PC-3 (cell line): ENCODE measurements at regions of chrX and their contacts with region 1.

Region 1: DNA sequence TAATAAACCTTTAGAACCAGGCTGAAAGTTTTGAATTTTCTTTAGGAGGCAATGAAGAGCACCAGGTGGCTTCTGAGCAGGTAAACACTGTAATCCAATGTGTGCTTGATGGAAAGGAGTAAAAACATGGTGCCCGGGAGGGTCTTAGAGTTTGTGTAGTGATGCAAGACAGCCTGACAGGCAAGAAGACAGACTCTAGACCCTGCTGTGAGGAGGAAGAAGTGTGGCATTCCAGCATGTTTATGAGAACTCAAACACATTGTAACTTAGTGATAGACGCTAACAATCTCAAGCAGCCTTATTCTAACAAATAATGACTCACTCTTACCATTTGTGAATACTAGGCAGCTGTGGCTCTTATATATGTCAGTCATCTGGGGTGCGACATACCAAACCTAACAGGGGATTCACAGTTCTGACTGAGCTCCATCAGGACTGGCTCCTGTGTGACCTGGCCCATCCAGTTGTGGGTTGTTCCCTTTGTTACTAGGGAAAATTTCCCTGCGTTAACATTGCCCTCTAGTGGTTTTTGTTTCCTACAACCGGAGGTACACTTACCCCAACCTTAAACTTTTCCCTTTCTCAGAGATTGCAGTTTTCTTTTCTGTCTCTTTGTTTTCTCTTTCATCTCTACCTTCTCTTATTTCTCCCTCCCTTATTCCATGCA is 53.8 kb downstream of the VSIG4 start:
- DNase-seq: peak; percentile 80
- ATAC-seq: peak; percentile 90
- H3K4me3 ChIP-seq: no peak overlapping the region
- H3K27ac ChIP-seq: no peak overlapping the region
- H3K4me1 ChIP-seq: peaks cover 4% of the 10 kb centered on the region; the same call in 1 of the 2 replicates
- H3K27me3 ChIP-seq: no peaks in the 10 kb centered on the region
- CTCF ChIP-seq: peak; percentile 71

Region 2: DNA sequence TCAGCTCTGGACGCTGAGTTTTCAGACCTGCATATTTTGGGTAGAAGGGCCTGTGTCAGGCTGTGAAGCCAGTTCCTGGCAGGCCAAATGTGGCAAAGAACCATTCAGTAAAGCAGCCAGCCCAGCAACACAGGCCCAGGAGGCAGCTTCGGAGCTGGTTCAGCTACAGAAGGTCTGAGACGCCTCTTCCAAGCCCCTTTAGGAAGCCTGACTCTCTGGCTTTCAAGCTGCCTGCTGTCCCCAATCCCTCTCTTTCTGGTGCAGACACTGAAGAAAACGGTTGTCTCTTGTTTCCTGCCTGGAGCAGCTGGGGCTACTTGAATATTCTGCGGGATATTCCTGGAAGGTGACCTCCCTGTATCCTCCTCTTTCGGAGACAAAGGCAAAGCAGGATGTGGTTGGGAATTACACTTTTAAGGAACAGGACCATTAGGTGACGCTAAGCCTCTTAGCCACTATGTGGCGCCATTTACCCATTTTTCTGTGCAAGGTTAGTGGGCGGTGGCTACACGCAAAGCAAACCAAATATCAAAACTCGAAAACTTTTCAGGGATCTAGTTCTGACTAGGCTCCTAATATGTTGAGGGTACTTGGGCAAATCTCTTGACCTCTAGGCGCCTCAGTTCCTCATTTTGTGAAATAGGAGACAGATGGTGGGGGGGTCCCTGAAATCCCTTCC is 404.3 kb before region 1 on chrX:
- CTCF ChIA-PET with region 1: interaction called, 4 read pairs
- POLR2A ChIA-PET with region 1: no interaction called
- intact Hi-C with region 1: loop called (anchors 1 kb)
- DNase-seq: peak; percentile 85
- ATAC-seq: peak; percentile 94
- H3K4me3 ChIP-seq: no peak overlapping the region
- H3K27ac ChIP-seq: no peak overlapping the region
- H3K4me1 ChIP-seq: peaks cover 6% of the 10 kb centered on the region; the same call in 1 of the 2 replicates
- H3K27me3 ChIP-seq: peaks cover 6% of the 10 kb centered on the region; the same call in 1 of the 2 replicates
- CTCF ChIP-seq: peak; percentile 90

Region 3: GRCh38 chrX:65745992-65746391 is 240.1 kb before region 1 on chrX:
- CTCF ChIA-PET with region 1: no interaction called
- POLR2A ChIA-PET with region 1: no interaction called
- intact Hi-C with region 1: loop called (anchors 2 kb)
- DNase-seq: peak; percentile 13
- ATAC-seq: no peak
- H3K4me3 ChIP-seq: no peak overlapping the region
- H3K27ac ChIP-seq: peak overlapping the region; percentile 60; the same call in 1 of the 2 replicates
- H3K4me1 ChIP-seq: peaks cover 8% of the 10 kb centered on the region; the same call in 1 of the 2 replicates
- H3K27me3 ChIP-seq: no peaks in the 10 kb centered on the region
- CTCF ChIP-seq: peak; percentile 43

Region 4: DNA sequence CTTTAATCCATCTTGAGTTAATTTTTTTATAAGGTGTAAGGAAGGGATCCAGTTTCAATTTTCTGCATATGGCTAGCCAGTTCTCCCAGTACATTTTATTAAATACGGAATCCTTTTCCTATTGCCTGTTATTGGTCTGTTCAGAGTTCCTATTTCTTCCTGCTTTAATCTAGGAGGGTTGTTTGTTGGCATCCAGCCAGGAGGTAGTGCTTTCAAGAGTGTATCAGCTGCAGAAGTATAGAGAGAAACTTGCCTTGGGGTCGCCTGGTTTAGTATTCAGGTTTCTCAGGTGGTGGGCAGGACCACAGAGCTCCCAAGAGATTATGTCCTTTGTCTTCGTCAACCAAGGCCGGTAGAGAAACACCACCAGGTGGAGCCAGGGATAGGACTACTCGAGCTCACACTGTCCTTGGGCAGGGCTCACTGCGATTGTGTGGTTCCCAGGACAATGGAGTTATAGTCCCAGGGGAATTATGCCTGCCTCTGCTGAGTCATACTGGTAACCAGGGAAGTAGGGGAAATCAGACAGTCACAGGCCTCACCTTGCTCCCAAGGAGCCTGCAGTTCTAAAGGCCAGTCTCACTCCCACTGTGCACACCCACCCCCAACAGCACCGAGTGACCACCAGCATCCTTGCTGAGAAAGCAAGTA is 114.3 kb before region 1 on chrX:
- CTCF ChIA-PET with region 1: no interaction called
- POLR2A ChIA-PET with region 1: no interaction called
- intact Hi-C with region 1: loop called (anchors 1 kb)
- DNase-seq: peak; percentile 74
- ATAC-seq: peak; percentile 77
- H3K4me3 ChIP-seq: no peak overlapping the region
- H3K27ac ChIP-seq: 0 out of 2 replicates have a peak overlapping the region, but pooled peaks have one; percentile 23
- H3K4me1 ChIP-seq: peaks cover 4% of the 10 kb centered on the region; the same call in 1 of the 2 replicates
- H3K27me3 ChIP-seq: no peaks in the 10 kb centered on the region
- CTCF ChIP-seq: peak; percentile 50